Caco-2 (cell line): ENCODE measurements at regions of chr3 and their contacts with region 1.

Region 1: DNA sequence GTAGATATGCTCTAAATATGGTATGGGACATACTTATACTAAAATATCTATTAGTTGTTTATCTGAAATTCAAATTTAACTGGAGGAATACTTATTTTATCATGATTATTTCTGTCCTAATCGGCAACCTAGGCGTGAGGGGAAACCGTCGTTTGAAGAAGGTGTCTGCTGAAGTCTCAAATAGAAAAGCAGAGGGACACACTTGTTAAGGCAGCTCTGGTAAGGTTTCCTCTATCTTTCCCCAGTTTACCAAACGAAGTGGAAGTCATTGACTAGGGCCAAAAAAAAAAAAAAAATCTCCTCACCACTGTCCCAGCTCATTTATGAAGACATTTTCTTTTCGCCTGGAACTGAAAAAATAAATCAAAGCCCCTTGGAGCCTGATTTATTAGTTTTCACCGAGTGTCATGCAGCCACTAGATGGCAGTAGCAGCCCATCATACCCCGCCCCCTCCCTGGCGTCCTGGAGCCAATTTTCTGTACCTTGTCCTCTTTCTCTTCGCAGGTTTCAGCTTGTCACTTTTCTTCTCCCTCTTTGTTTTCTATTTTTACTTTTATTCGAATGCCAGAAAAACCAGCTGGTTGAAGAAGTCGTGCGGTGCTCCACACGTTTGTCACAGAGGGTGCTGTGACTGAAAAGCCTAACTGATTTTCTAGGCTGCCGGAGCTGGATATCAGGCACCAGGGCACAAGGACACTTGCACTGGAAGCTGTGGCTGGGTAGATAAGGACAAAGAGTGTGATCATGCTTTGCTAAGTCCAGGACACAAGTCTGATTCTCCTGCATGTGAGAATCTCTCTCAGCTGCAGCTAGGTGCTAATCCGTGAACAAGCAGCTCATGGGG is 238.7 kb downstream of the ZPLD1 start:
- DNase-seq: peak; percentile 52 to 78
- H3K4me3 ChIP-seq: peak overlapping the region; percentile 11; the same call in 1 of the 2 replicates
- H3K4me3 Mint-ChIP-seq: peak overlapping the region; percentile 42
- H3K27ac Mint-ChIP-seq: no peak overlapping the region
- H3K4me1 ChIP-seq: peaks cover 11% of the 10 kb centered on the region; the same call in 1 of the 2 replicates
- H3K4me1 Mint-ChIP-seq: no peaks in the 10 kb centered on the region
- H3K27me3 ChIP-seq: no peaks in the 10 kb centered on the region
- H3K27me3 Mint-ChIP-seq: no peaks in the 10 kb centered on the region
- CTCF ChIP-seq: peak; percentile 81

Region 2: GRCh38 chr3:102802819-102803420 is 129.4 kb after region 1 on chr3:
- CTCF ChIA-PET with region 1: no interaction called
- POLR2A ChIA-PET with region 1: no interaction called
- intact Hi-C with region 1: loop called (anchors 10 kb)
- DNase-seq: no peak
- H3K4me3 ChIP-seq: no peak overlapping the region
- H3K4me3 Mint-ChIP-seq: no peak overlapping the region
- H3K27ac Mint-ChIP-seq: no peak overlapping the region
- H3K4me1 ChIP-seq: no peaks in the 10 kb centered on the region
- H3K4me1 Mint-ChIP-seq: no peaks in the 10 kb centered on the region
- H3K27me3 ChIP-seq: no peaks in the 10 kb centered on the region
- H3K27me3 Mint-ChIP-seq: no peaks in the 10 kb centered on the region
- CTCF ChIP-seq: no peak

Region 3: DNA sequence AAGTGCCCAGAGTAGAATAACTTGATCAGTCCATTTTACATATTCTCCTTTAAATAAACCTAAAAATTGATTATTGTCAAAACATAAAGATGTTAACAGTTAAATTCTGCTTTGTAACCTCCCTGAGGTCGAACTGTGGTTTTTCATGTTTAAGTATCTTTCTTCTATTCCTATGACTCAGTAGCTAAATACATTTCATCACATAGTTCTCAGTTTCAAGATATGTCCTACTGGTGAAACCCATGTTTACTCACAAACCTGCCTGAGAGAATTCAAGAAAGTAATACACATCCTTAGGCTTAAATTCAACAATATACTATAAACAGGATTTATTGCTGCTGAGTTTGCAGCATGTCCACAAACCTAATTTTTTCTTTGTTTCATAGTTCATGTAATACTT is 454.2 kb after region 1 on chr3:
- CTCF ChIA-PET with region 1: interaction called, 4 read pairs
- POLR2A ChIA-PET with region 1: no interaction called
- intact Hi-C with region 1: loop called (anchors 1 kb)
- DNase-seq: no peak
- H3K4me3 ChIP-seq: no peak overlapping the region
- H3K4me3 Mint-ChIP-seq: no peak overlapping the region
- H3K27ac Mint-ChIP-seq: no peak overlapping the region
- H3K4me1 ChIP-seq: no peaks in the 10 kb centered on the region
- H3K4me1 Mint-ChIP-seq: no peaks in the 10 kb centered on the region
- H3K27me3 ChIP-seq: no peaks in the 10 kb centered on the region
- H3K27me3 Mint-ChIP-seq: no peaks in the 10 kb centered on the region
- CTCF ChIP-seq: no peak

Region 4: GRCh38 chr3:103499132-103499900 is 825.8 kb after region 1 on chr3:
- CTCF ChIA-PET with region 1: no interaction called
- POLR2A ChIA-PET with region 1: no interaction called
- intact Hi-C with region 1: loop called (anchors 2 kb)
- DNase-seq: no peak
- H3K4me3 ChIP-seq: no peak overlapping the region
- H3K4me3 Mint-ChIP-seq: no peak overlapping the region
- H3K27ac Mint-ChIP-seq: no peak overlapping the region
- H3K4me1 ChIP-seq: no peaks in the 10 kb centered on the region
- H3K4me1 Mint-ChIP-seq: no peaks in the 10 kb centered on the region
- H3K27me3 ChIP-seq: no peaks in the 10 kb centered on the region
- H3K27me3 Mint-ChIP-seq: no peaks in the 10 kb centered on the region
- CTCF ChIP-seq: no peak